ENCODE measurements at regions of chr3 and their contacts with region 1.

Region 1: GRCh38 chr3:377158-377561 is 180.6 kb downstream of the CHL1 start:
- DNase-seq: no peak
- H3K4me3 ChIP-seq: no peak overlapping the region
- H3K27ac ChIP-seq: no peak overlapping the region
- H3K27me3 ChIP-seq: no peaks in the 10 kb centered on the region
- CTCF ChIP-seq: peak; percentile 60

Region 2: DNA sequence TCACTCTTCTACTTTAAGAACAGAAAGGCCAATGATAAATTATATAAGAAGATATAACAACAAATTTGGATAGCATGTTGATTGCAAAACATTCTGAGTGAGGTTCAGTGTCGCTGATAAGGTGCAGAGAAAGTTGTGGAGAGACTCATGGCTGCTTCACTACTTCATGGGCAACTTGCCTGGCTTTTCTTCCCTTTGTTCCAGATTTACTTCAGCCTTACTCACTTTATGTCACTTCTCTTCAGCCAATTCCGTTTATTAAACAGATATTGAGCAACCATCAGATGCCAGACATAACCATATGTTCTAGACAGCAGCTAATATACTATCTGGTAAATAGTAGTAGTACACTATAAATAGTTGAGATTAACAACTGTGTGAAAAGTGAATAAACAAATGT is 330.6 kb before region 1 on chr3:
- CTCF ChIA-PET with region 1: interaction called, 19 read pairs
- POLR2A ChIA-PET with region 1: no interaction called
- DNase-seq: no peak
- H3K4me3 ChIP-seq: no peak overlapping the region
- H3K27ac ChIP-seq: no peak overlapping the region
- H3K27me3 ChIP-seq: no peaks in the 10 kb centered on the region
- CTCF ChIP-seq: no peak

Region 3: GRCh38 chr3:396293-396692 is 19.1 kb after region 1 on chr3:
- CTCF ChIA-PET with region 1: interaction called, 13 read pairs
- POLR2A ChIA-PET with region 1: no interaction called
- DNase-seq: no peak
- H3K4me3 ChIP-seq: no peak overlapping the region
- H3K27ac ChIP-seq: no peak overlapping the region
- H3K27me3 ChIP-seq: no peaks in the 10 kb centered on the region
- CTCF ChIP-seq: no peak

Region 4: DNA sequence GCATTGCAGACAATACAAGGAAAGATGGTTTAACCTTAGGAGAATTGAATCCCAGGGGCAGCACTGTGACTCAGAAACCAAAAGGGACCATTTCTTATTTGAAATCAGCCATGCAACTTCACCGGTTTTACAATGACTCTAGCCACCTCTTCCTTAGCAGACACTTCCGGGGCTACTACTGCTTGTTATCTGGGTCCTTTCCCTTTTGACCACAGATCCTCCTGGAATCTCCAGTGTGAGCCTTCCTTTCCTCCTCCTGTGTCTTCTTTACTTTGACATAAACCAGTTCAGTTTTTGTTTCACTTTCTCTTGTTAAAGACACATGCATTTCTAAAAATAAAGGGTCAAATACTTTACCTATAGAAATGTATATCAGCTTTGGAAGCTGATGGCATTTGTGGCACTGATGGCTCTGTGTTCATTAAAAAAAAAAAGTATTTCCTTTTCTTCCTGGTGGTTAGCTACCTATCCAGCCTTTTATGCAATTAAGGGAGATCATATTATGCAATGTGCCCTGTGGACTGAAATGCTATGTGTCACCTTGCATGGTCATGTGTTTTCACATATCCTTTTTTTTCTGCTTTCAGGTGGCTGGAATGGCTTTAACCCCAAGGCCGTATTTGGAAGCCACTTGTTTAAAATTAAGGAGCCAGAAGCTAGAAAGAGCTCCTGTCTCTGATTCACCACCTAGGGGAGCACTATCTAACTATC is 115.6 kb after region 1 on chr3:
- CTCF ChIA-PET with region 1: no interaction called
- POLR2A ChIA-PET with region 1: no interaction called
- DNase-seq: no peak
- H3K4me3 ChIP-seq: no peak overlapping the region
- H3K27ac ChIP-seq: no peak overlapping the region
- H3K27me3 ChIP-seq: no peaks in the 10 kb centered on the region
- CTCF ChIP-seq: no peak

Measured in AG04450 (cell line).